Common myeloid progenitor, CD34-positive (primary cell): ENCODE measurements at regions of chr1 and their contacts with region 1.

Region 1: DNA sequence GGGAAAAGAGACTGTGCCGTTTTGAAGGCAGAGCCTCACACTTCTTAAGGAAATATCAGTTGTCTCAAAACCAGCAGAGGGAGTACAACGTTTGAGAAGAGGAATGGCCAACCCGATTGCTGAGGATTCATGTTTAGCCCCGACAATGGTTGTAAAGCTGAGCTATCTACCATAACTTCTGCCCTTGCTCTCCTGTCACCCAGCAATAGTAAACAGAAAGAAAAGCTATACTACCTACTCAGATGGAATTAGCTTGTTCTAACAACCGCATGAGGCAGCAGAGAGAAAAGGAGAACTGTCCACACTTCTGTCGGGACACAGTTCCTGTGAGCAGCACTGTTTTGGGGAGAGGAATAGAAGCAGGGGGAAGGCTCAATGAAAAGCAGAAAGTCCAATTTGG is 91.2 kb downstream of the SLC45A1 start:
- DNase-seq: peak; percentile 80 to 90 (median 85)
- H3K4me3 ChIP-seq: peak overlapping the region in 3 of 7 experiments; percentile 2 to 25 (median 25)
- H3K27ac ChIP-seq: peak overlapping the region in 1 of 2 experiments; percentile 69
- H3K4me1 ChIP-seq: peaks cover 0 to 28% (median 19%) of the 10 kb centered on the region in 4 experiments
- H3K27me3 ChIP-seq: no peaks in the 10 kb centered on the region

Region 2: GRCh38 chr1:8423302-8423649 is 14.2 kb after region 1 on chr1:
- CTCF ChIA-PET with region 1: interaction called, 29 read pairs
- POLR2A ChIA-PET with region 1: interaction called, 5 read pairs
- DNase-seq: peak in 1 of 3 donors; percentile 35
- H3K4me3 ChIP-seq: peak overlapping the region; percentile 74 to 95 (median 91)
- H3K27ac ChIP-seq: peak overlapping the region; percentile 60 to 84
- H3K4me1 ChIP-seq: peaks cover 48 to 80% (median 70%) of the 10 kb centered on the region in 4 experiments
- H3K27me3 ChIP-seq: no peaks in the 10 kb centered on the region

Region 3: DNA sequence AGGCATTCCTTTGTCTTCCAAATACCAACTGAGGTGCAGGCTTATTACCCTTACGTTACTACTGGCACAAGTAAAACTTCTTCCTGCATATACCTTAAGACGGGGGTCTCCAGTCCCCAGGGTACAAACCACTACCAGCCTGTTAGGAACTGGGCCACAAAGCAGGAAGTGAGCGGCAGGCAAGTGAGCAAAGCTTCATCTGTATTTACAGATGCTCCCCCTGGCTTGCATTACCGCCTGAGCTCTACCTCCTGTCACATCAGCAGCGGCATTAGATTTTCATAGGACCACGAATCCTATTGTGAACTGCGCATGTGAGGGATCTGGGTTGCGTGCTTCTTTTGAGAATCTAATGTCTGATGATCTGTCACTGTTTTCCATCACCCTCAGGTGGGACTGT is 21.9 kb after region 1 on chr1:
- CTCF ChIA-PET with region 1: interaction called, 14 read pairs
- POLR2A ChIA-PET with region 1: no interaction called
- DNase-seq: peak; percentile 40 to 80 (median 72)
- H3K4me3 ChIP-seq: peak overlapping the region in 1 of 7 experiments; percentile 6
- H3K27ac ChIP-seq: no peak overlapping the region
- H3K4me1 ChIP-seq: peaks cover 45 to 61% (median 60%) of the 10 kb centered on the region in 4 experiments
- H3K27me3 ChIP-seq: no peaks in the 10 kb centered on the region